CD14-positive monocyte (primary cell): ENCODE measurements at regions of chr3 and their contacts with region 1.

Region 1: DNA sequence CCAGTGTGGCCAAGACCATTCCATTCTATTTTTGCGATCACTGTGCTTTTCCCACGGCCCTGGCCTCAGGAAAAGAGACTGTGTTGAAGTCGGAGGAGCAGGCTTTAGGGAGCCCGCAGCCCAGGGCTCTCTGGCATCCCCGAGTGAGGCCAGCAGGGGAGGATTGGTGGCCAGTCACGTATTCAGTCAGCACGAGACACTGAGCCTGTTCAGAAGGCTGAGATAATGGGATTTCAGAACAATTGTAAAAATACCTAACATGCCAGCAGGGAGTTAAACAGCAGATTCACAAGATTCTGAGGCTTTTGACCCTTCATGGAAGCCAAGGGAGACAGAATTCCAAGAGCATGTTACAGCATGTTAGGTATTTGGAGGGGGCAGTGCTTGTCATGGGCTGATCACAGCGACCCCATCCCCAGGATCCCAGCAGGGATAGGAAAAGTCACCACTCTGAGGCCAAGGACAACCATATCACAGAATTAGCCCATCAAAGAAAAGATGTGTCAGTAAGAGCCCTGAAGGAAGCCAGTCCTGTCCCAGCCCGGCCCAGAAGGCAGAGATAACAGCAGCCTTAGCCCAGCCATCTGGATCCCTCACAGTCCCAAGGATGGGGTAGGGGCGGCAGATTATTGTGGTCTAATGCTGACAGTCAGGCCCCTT is 40.6 kb downstream of the AMOTL2 start:
- DNase-seq: no peak
- H3K4me3 ChIP-seq: no peak overlapping the region
- H3K4me3 Mint-ChIP-seq: no peak overlapping the region
- H3K27ac ChIP-seq: no peak overlapping the region
- H3K27ac Mint-ChIP-seq: no peak overlapping the region
- H3K4me1 ChIP-seq: no peaks in the 10 kb centered on the region
- H3K4me1 Mint-ChIP-seq: no peaks in the 10 kb centered on the region
- H3K27me3 ChIP-seq: no peaks in the 10 kb centered on the region
- H3K27me3 Mint-ChIP-seq: peaks cover 4 to 8% (median 6%) of the 10 kb centered on the region in 3 donors
- CTCF ChIP-seq: no peak

Region 2: GRCh38 chr3:134453631-134454030 is 120.0 kb after region 1 on chr3:
- intact Hi-C with region 1: loop called in 1 of 2 experiments (anchors 10 kb)
- DNase-seq: no peak
- H3K4me3 ChIP-seq: no peak overlapping the region
- H3K4me3 Mint-ChIP-seq: no peak overlapping the region
- H3K27ac ChIP-seq: no peak overlapping the region
- H3K27ac Mint-ChIP-seq: no peak overlapping the region
- H3K4me1 ChIP-seq: peaks cover 2 to 8% of the 10 kb centered on the region in 2 donors
- H3K4me1 Mint-ChIP-seq: peaks cover 11% of the 10 kb centered on the region
- H3K27me3 ChIP-seq: no peaks in the 10 kb centered on the region
- H3K27me3 Mint-ChIP-seq: peaks cover 3 to 12% (median 8%) of the 10 kb centered on the region in 3 donors
- CTCF ChIP-seq: no peak